ENCODE measurements at regions of chr12 and their contacts with region 1.

Region 1: GRCh38 chr12:55073043-55074022 is 52.9 kb upstream of the OR9K2 start:
- DNase-seq: peak; percentile 89
- ATAC-seq: peak; percentile 61
- H3K4me3 Mint-ChIP-seq: no peak overlapping the region
- H3K27ac Mint-ChIP-seq: no peak overlapping the region
- H3K4me1 Mint-ChIP-seq: peaks cover 4% of the 10 kb centered on the region
- H3K27me3 Mint-ChIP-seq: peaks cover 20% of the 10 kb centered on the region

Region 2: GRCh38 chr12:54603173-54603814 is 470.0 kb before region 1 on chr12:
- CTCF ChIA-PET with region 1: no interaction called
- POLR2A ChIA-PET with region 1: no interaction called
- intact Hi-C with region 1: loop called in 1 of 2 experiments (anchors 2 kb)
- DNase-seq: peak; percentile 78
- ATAC-seq: peak; percentile 93
- H3K4me3 Mint-ChIP-seq: no peak overlapping the region
- H3K27ac Mint-ChIP-seq: no peak overlapping the region
- H3K4me1 Mint-ChIP-seq: peaks cover 6% of the 10 kb centered on the region
- H3K27me3 Mint-ChIP-seq: peaks cover 13% of the 10 kb centered on the region

Region 3: GRCh38 chr12:54723379-54724256 is 349.7 kb before region 1 on chr12:
- CTCF ChIA-PET with region 1: interaction called, 12 read pairs
- POLR2A ChIA-PET with region 1: no interaction called
- intact Hi-C with region 1: loop called in 1 of 2 experiments (anchors 1 kb)
- DNase-seq: peak; percentile 30
- ATAC-seq: peak; percentile 51
- H3K4me3 Mint-ChIP-seq: no peak overlapping the region
- H3K27ac Mint-ChIP-seq: no peak overlapping the region
- H3K4me1 Mint-ChIP-seq: no peaks in the 10 kb centered on the region
- H3K27me3 Mint-ChIP-seq: peaks cover 3% of the 10 kb centered on the region

Region 4: DNA sequence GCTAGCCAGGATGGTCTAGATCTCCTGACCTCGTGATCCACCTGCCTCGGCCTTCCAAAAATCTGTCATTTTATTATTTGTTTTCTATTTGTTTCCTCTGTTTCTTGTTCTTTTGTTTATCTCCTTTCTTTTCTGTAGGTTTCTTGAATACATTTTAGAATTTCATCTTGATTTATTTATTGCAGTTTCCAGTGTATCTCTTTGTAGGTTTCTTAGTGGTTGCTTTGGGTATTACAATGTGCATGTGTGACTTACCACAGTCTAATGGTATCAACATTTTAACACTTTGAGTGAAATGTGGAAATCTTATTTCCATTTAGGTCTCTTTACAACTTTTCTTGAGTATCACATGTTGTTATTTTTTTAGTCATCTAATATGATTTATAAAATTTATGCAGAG is 248.9 kb before region 1 on chr12:
- CTCF ChIA-PET with region 1: no interaction called
- POLR2A ChIA-PET with region 1: no interaction called
- intact Hi-C with region 1: no loop called
- DNase-seq: no peak
- ATAC-seq: no peak
- H3K4me3 Mint-ChIP-seq: no peak overlapping the region
- H3K27ac Mint-ChIP-seq: no peak overlapping the region
- H3K4me1 Mint-ChIP-seq: no peaks in the 10 kb centered on the region
- H3K27me3 Mint-ChIP-seq: peaks cover 3% of the 10 kb centered on the region

Region 5: GRCh38 chr12:54853995-54854566 is 219.3 kb before region 1 on chr12 and contains the start of gene MUCL1:
- CTCF ChIA-PET with region 1: interaction called, 10 read pairs
- POLR2A ChIA-PET with region 1: no interaction called
- intact Hi-C with region 1: loop called (anchors 1 kb)
- DNase-seq: peak; percentile 82
- ATAC-seq: peak; percentile 95
- H3K4me3 Mint-ChIP-seq: no peak within 1 kb of the TSS
- H3K27ac Mint-ChIP-seq: no peak within 1 kb of the TSS
- H3K4me1 Mint-ChIP-seq: peaks cover 18% of the 10 kb centered on the region
- H3K27me3 Mint-ChIP-seq: no peaks in the 10 kb centered on the region
- total RNA-seq, gene MUCL1: not detected

Region 6: GRCh38 chr12:54968181-54968730 is 105.1 kb before region 1 on chr12:
- CTCF ChIA-PET with region 1: interaction called, 30 read pairs
- POLR2A ChIA-PET with region 1: no interaction called
- intact Hi-C with region 1: no loop called
- DNase-seq: no peak
- ATAC-seq: no peak
- H3K4me3 Mint-ChIP-seq: no peak overlapping the region
- H3K27ac Mint-ChIP-seq: peak overlapping the region; percentile 58
- H3K4me1 Mint-ChIP-seq: peaks cover 60% of the 10 kb centered on the region
- H3K27me3 Mint-ChIP-seq: no peaks in the 10 kb centered on the region

Region 7: GRCh38 chr12:54993161-54993835 is 80.0 kb before region 1 on chr12:
- CTCF ChIA-PET with region 1: interaction called, 463 read pairs
- POLR2A ChIA-PET with region 1: interaction called, 5 read pairs
- intact Hi-C with region 1: loop called (anchors 1 kb)
- DNase-seq: peak; percentile 70
- ATAC-seq: peak; percentile 53
- H3K4me3 Mint-ChIP-seq: no peak overlapping the region
- H3K27ac Mint-ChIP-seq: no peak overlapping the region
- H3K4me1 Mint-ChIP-seq: peaks cover 43% of the 10 kb centered on the region
- H3K27me3 Mint-ChIP-seq: no peaks in the 10 kb centered on the region

Region 8: DNA sequence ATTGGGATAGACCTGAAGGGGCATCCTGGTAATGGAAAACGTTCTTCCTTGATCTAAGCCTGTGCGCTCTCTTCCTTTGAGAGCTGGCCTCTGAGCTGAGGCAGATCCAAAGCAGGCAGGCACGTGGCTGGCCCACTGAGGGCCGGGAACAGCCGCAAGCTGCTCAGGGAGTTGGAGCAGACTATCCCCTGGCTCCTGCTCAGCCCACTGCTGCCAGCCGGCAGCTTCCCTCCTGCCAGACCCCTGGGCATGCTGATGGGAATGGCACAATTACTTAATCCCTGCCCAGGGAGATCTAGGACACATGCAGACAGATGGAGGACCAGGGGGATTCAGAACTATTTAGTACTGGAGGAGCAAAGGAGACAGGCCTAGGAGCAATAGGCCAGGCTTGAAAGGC is 39.1 kb before region 1 on chr12:
- CTCF ChIA-PET with region 1: interaction called, 10 read pairs
- POLR2A ChIA-PET with region 1: no interaction called
- intact Hi-C with region 1: no loop called
- DNase-seq: no peak
- ATAC-seq: no peak
- H3K4me3 Mint-ChIP-seq: no peak overlapping the region
- H3K27ac Mint-ChIP-seq: no peak overlapping the region
- H3K4me1 Mint-ChIP-seq: peaks cover 38% of the 10 kb centered on the region
- H3K27me3 Mint-ChIP-seq: no peaks in the 10 kb centered on the region